ENCODE measurements at regions of chr16 and their contacts with region 1.

Region 1: GRCh38 chr16:31073968-31074813 is at the starts of genes ZNF646 and ZNF668:
- DNase-seq: peak; percentile 92

Region 2: DNA sequence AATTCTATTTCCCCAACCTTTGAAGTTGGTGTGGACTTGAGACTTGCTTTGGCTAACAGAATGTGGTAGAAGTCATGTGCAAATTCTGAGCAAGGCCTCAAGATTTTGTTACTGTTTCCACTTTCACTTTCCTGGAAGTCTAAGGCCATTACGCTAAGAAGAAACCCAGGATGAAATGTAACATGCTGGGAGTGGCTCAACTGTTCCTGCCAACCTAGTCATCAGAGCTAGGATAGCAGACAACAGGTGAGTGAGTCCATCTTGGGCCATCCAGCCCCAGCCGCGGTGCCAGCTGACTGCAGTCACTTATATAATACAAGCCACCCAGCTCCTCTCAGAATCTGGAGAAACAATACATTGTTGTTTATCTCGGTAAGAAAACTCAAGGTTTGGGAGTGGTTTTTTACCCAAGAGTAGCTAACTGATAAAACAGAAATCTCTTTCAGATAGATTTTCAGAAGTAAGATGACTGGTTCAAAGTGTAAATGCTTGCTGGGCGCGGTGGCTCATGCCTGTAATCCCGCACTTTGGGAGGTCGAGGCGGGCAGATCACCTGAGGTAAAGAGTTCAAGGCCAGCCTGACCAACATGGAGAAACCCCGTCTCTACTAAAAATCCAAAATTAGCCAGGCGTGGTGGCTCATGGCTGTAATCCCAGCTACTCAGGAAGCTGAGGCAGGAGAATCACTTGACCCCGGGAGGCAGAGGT is 51.5 kb before region 1 on chr16:
- CTCF ChIA-PET with region 1: no interaction called
- POLR2A ChIA-PET with region 1: no interaction called
- DNase-seq: no peak

Region 3: DNA sequence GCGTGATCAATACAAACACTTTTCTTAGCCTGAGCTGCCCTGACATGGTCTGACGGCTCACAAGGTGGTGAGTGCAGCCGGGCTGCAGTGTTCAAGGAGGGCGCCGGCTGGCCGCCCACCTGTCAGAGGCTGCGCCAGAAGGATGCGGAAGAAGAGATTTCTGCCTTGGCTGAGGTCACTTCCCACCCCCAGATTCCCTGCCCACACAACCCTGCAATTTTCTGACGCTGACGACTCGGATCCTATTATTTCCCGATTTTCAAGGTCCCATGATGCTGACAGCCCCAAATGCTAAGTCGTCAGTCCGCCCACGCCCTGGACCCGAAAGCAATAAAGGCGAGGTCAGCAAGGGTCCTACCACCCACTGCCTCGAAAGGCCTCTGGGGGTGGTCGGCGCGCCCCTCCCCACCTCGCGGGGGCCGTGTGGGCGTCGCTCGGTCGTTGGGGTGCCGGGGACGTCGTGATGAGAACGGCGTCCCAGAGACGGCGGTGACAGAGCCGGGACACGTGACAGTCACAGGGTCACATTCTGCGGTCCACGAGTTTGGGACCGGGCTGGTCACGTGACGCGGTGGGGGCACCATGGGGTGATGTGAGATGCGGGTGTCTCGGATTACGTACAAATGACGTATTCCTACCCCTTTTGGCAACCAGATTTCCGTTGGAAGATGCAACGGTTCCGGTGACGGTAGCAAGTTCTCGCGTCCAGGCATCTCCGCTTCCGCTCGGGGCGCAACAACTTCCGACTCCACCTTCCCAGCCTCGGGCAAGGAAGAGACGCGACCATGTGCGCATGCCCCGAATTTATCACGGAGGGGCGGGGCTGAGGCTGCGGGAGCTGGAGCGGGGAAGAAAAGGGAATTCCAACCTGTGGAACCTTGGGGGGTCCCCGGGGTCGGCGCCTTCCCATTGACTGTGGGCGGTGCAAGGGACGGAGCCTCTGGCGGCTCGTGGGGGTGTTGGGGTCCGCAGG is 41.2 kb before region 1 on chr16 and contains the start of gene STX4:
- CTCF ChIA-PET with region 1: no interaction called
- POLR2A ChIA-PET with region 1: interaction called, 10 read pairs
- DNase-seq: peak; percentile 99

Region 4: GRCh38 chr16:31084616-31085260 is 10.5 kb after region 1 on chr16:
- CTCF ChIA-PET with region 1: no interaction called
- POLR2A ChIA-PET with region 1: interaction called, 23 read pairs
- DNase-seq: no peak

Region 5: DNA sequence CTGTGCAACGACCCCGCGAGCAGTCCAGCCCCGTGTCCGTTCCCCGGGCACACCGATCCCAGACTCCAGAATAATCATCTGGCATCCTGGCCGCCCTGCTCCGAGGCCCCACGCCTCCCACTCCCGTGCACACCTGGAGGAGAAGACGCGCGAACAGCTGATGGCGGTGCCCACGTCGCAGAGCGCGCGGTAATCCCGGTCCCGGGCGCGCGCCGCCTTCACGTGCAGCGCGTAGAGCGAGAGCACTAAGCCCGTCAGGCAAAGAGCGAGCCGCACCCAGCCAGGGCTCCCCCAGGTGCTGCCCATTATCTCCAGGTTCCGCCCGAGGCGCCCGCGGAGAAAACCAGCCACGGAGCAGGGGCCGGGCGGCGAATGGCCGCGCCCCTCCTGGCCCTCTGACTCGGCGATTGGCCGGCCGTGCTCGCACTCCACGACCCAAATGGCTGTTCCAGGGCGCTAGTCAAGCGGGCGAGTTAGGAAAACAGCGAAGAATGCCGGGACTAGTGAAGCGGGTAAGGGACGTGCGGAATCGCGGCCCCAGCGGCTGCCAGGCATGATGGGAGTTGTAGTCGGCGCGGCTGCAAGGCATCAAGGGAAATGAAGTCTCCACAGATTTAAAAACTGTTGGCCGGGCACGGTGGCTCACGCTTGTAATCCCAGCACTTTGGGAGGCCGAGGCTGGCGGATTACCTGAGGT is 20.4 kb after region 1 on chr16 and contains the start of gene VKORC1:
- CTCF ChIA-PET with region 1: no interaction called
- POLR2A ChIA-PET with region 1: interaction called, 16 read pairs
- DNase-seq: peak; percentile 90

Region 6: DNA sequence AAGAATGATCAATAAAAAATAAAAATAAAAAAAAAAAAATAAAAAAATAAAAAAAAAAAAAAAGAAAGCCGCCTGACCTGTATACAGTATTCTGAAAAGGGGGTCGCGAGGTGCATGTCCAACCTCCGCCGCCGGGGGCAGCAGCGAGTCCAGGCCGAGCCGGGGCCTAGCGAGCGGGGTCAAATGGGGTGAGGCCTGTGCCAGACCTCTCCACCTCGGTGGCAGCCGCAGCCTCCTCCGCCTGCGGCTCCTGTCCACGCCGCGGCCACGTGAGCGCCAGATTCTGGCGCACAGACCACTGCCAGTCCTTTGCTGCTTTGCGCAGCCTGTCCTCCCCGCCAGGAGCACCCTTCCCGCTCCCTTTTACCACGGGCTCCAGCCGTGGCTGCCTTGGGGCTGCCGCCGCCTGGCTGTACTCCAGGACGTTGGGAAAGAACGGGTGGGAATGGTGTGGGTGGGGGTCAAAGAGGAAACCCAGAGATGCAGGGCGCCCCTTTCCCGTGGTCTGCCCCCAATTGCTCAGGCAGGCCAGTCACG is 31.6 kb after region 1 on chr16:
- CTCF ChIA-PET with region 1: no interaction called
- POLR2A ChIA-PET with region 1: no interaction called
- DNase-seq: peak; percentile 79

Region 7: DNA sequence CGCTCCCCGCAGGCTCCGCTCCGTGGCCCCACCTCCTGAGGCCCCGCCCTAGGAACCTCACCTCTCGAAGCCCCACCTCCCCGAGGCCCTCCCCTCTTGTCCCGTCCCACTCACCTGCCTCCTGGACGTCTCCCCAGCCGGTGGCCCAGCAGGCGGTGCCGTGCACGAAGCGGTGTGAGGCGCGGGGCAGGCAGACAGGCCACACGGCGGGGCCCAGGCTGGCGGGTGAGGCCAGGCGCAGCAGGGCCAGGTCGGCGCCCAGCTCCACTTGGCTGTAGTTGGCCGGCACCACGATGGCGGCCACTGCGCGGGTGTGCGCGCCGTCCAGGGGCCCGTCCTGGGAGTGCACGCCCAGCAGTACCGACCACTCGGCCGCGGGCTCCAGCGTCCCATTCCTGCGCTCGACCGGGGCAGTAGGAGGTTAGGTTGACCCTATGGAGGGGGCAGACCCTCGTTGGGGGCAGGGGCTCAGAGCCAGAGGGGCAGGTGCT is 74.1 kb after region 1 on chr16:
- CTCF ChIA-PET with region 1: no interaction called
- POLR2A ChIA-PET with region 1: no interaction called
- DNase-seq: no peak

Region 8: GRCh38 chr16:31377210-31377903 is 303.2 kb after region 1 on chr16:
- CTCF ChIA-PET with region 1: no interaction called
- POLR2A ChIA-PET with region 1: no interaction called
- DNase-seq: no peak